ENCODE measurements at regions of chr2 and their contacts with region 1.

Region 1: DNA sequence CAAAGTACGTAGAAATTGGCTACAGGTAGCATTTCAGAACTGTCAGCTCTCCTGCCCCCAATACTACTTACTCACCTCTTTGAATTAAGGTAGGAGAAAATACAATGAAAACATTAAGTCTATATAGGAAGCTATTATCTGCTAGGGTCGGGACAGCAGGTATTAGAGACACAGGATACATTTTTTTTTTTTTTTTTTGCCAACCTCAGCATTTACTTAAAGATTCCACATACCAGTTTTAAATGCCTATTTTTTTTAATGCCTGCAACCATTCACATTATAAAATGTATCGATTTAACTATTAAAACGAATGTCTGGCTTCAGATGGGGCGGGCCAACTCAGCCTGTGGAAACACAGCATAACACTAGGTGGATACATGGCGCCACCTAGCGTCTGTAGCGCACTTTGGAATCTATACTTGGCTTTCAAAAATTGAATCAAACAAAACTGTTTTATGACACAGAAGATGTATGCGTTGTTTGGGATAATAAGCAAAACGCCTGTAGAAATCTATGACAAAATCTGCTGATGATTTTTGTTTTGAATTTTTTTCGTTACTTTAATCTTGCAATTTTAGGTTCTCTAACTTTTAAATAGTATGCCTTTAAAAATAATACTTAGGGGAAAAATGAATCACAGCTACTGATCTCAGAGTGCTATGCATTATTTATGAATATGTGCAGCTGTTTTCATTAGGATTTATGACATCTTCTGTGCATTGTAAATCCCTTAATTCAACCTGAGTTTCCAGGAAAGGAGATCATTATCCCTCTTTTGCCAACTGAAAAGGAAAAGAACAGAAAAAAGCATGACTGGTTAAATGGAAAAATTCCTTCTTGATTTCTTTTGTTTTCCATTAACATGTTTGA is 261.0 kb downstream of the NYAP2 start:
- DNase-seq: peak; percentile 40 to 91 (median 76)
- ATAC-seq: peak; percentile 71 to 93 (median 89)
- H3K4me3 ChIP-seq: no peak overlapping the region
- H3K27ac ChIP-seq: no peak overlapping the region
- H3K4me1 ChIP-seq: no peaks in the 10 kb centered on the region
- H3K27me3 ChIP-seq: no peaks in the 10 kb centered on the region
- CTCF ChIP-seq: peak; percentile 63 to 81 (median 76)

Region 2: GRCh38 chr2:225122583-225123486 is 537.7 kb before region 1 on chr2:
- intact Hi-C with region 1: loop called in 2 of 3 experiments (anchors 5 kb)
- DNase-seq: peak in 1 of 6 donors; percentile 16
- ATAC-seq: peak in 3 of 4 donors; percentile 59 to 63 (median 61)
- H3K4me3 ChIP-seq: no peak overlapping the region
- H3K27ac ChIP-seq: no peak overlapping the region
- H3K4me1 ChIP-seq: peaks cover 0 to 4% (median 0%) of the 10 kb centered on the region in 3 donors
- H3K27me3 ChIP-seq: no peaks in the 10 kb centered on the region
- CTCF ChIP-seq: peak in 3 of 4 donors; percentile 10 to 47 (median 25)

Region 3: GRCh38 chr2:225282858-225283710 is 377.4 kb before region 1 on chr2:
- intact Hi-C with region 1: loop called (anchors 5 to 10 kb)
- DNase-seq: peak in 1 of 6 donors; percentile 29
- ATAC-seq: peak in 3 of 4 donors; percentile 80 to 90 (median 86)
- H3K4me3 ChIP-seq: no peak overlapping the region
- H3K27ac ChIP-seq: no peak overlapping the region
- H3K4me1 ChIP-seq: no peaks in the 10 kb centered on the region
- H3K27me3 ChIP-seq: no peaks in the 10 kb centered on the region
- CTCF ChIP-seq: peak; percentile 58 to 74 (median 69)

Region 4: DNA sequence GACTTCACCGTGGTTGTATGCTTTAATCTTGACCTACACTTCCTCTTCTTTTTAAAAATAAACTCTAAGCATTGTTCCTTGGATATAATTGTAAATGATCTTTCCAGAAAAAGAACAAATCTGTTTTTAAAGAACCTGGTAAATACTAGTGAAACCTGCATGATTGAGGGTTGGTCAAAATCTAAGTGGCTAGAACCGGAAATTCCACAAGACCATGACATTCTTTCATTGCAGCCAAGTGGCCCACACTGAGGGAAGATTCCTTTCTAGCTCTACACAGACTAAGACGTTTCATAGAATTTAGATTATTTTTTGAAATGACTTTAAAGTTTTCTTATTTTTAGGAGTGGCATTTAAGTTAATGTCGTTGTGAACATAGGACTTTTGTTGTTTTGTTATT is 95.7 kb after region 1 on chr2:
- intact Hi-C with region 1: no loop called
- DNase-seq: no peak
- ATAC-seq: no peak
- H3K4me3 ChIP-seq: no peak overlapping the region
- H3K27ac ChIP-seq: no peak overlapping the region
- H3K4me1 ChIP-seq: no peaks in the 10 kb centered on the region
- H3K27me3 ChIP-seq: no peaks in the 10 kb centered on the region
- CTCF ChIP-seq: no peak

Region 5: GRCh38 chr2:225894240-225894980 is 233.9 kb after region 1 on chr2:
- intact Hi-C with region 1: no loop called
- DNase-seq: no peak
- ATAC-seq: peak in 3 of 4 donors; percentile 32 to 74 (median 69)
- H3K4me3 ChIP-seq: no peak overlapping the region
- H3K27ac ChIP-seq: peak overlapping the region in 1 of 4 donors; percentile 3
- H3K4me1 ChIP-seq: no peaks in the 10 kb centered on the region
- H3K27me3 ChIP-seq: no peaks in the 10 kb centered on the region
- CTCF ChIP-seq: no peak

Region 6: GRCh38 chr2:226799181-226799975 is 1138.9 kb after region 1 on chr2 and contains the start of gene IRS1:
- intact Hi-C with region 1: loop called in 1 of 3 experiments (anchors 10 kb)
- DNase-seq: peak; percentile 69 to 89 (median 77)
- ATAC-seq: peak; percentile 54 to 66 (median 60)
- H3K4me3 ChIP-seq: peak within 1 kb of the TSS; percentile 72 to 88 (median 77)
- H3K27ac ChIP-seq: peak within 1 kb of the TSS; percentile 68 to 94 (median 85)
- H3K4me1 ChIP-seq: peaks cover 17 to 28% (median 19%) of the 10 kb centered on the region in 3 donors
- H3K27me3 ChIP-seq: no peaks in the 10 kb centered on the region
- CTCF ChIP-seq: no peak
- total RNA-seq, gene IRS1: 4.4 to 12.7 (median 5.9) TPM

Region 7: DNA sequence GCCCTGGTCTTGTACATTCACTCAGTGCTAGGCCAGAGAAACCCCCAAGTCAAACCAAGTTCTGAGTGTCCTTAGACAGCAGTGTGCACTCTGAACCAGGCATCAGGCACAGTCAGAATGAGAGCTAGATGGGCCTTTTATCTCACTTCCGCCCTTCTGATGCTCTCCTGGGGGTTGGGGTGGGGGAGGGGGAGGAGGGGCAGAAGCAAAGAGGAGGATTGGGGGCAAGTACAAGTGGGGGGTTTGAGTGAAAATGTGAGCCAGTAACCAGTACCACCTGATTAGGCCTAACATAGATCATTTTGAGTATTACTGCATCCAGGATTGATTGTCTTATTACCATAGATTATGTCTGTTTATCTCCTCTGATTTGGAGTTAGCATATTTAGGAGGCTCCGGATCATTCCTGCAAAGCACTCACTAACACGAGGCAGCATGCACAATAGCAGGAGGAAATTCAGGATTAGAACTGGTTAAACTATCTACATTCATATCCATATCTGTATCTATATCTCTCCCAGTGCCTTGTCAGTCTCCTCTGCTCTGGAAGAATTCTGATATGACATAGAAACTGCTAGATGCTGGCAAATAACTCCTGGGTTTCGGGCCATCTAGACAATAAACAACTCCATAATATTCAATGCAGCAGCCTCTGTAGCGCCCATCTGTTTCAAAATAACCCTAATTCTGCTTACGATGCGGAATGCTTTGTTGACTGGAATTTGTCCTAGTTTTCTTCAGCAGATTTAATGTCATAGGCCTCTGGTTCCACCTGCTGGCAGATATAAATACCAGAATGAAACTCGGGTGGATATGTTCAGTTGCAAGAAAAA is 1324.5 kb after region 1 on chr2:
- intact Hi-C with region 1: loop called in 1 of 3 experiments (anchors 5 kb)
- DNase-seq: peak in 2 of 6 donors; percentile 11 to 40
- ATAC-seq: peak; percentile 53 to 91 (median 88)
- H3K4me3 ChIP-seq: no peak overlapping the region
- H3K27ac ChIP-seq: no peak overlapping the region
- H3K4me1 ChIP-seq: no peaks in the 10 kb centered on the region
- H3K27me3 ChIP-seq: no peaks in the 10 kb centered on the region
- CTCF ChIP-seq: peak; percentile 20 to 61 (median 34)